HEK293 (cell line): ENCODE measurements at regions of chr16 and their contacts with region 1.

Region 1: GRCh38 chr16:67825119-67825518 is 17.0 kb upstream of the THAP11 start:
- H3K4me3 ChIP-seq: no peak overlapping the region
- H3K27ac ChIP-seq: no peak overlapping the region
- H3K4me1 ChIP-seq: no peaks in the 10 kb centered on the region
- CTCF ChIP-seq: no peak

Region 2: DNA sequence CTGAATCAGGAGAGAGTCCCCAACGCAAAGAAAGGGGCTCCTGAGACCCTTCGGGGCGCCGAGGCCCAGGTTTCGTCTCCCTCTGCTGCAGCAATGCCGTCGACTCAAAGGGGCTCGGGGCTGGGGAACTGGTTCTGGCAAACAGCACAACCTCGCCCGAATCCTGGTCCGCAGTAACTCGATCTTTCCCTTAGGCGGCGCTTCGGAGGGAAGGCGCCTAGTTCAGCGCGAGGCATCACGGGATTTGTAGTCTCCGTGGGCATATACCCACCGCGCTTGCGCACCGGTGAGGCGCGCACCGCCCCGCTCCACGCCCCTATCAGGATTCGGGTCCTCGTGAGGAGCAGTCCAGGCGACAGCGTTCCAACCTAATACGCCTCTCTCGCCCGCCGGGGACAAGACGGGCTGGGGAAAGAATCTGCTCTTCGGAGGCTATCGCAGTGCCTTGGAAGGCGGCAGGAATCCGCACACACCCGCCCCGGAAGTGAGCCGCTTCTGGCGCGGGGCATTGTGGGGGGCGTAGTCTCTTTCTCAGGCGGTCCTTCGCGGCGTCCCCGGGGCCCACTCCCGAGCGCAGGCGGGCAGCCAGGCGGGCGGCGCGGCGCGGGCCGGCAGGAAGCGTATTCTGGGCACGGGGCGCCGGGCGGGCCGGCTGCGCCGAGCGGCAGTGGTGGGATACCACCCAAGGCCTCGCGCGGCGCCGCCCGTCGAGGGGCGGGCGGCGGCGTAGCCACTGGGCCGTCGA is 16.8 kb after region 1 on chr16 and contains the start of gene THAP11:
- CTCF ChIA-PET with region 1: interaction called, 4 read pairs
- POLR2A ChIA-PET with region 1: interaction called, 11 read pairs
- H3K4me3 ChIP-seq: peak within 1 kb of the TSS; percentile 92
- H3K27ac ChIP-seq: peak within 1 kb of the TSS; percentile 99
- H3K4me1 ChIP-seq: peaks cover 16% of the 10 kb centered on the region
- CTCF ChIP-seq: peak; percentile 96